SK-N-SH (cell line): ENCODE measurements at regions of chr14 and their contacts with region 1.

Region 1: DNA sequence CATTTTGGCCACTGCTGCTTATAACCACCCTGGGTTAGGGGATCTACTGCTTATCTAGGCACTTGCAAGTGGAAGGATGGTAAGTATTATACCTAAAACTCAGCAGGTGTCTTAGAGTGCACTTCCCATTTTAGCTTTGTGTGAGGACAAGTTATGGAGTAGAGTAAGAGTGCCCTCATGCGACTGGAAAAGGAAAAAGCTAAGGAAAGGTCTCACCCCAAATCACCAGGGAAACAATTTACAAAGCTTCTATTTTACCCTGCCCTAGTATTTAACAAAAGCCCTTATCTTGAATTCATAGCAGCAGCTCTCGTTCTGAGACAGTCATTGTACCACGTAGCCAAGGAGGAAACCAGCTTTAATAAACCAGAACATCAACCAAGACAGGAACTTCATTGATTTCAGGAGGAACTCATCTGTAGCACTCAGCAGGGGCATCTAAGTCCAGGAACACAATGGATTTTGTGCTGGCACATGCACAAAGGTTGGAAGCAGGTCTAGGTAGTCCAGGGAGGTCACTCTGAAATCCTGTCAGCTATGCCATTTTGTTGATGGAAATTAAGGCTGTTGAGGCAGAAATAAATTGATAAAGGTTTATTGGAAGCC is 2.9 kb downstream of the RDH12 start:
- DNase-seq: peak; percentile 59
- H3K4me3 ChIP-seq: no peak overlapping the region
- H3K27ac ChIP-seq: no peak overlapping the region
- H3K4me1 ChIP-seq: no peaks in the 10 kb centered on the region
- H3K27me3 ChIP-seq: no peaks in the 10 kb centered on the region
- CTCF ChIP-seq: peak; percentile 78
- EP300 ChIP-seq: no peak
- RAD21 ChIP-seq: peak; percentile 92

Region 2: GRCh38 chr14:67526676-67527459 is 177.7 kb before region 1 on chr14:
- CTCF ChIA-PET with region 1: interaction called, 27 read pairs
- POLR2A ChIA-PET with region 1: no interaction called
- DNase-seq: peak; percentile 65
- H3K4me3 ChIP-seq: peak overlapping the region in 1 of 2 experiments; percentile 34; a peak in 1 of 4 replicates
- H3K27ac ChIP-seq: no peak overlapping the region
- H3K4me1 ChIP-seq: no peaks in the 10 kb centered on the region; a peak in 1 of 4 replicates
- H3K27me3 ChIP-seq: peaks cover 18% of the 10 kb centered on the region; the same call in 1 of the 2 replicates
- CTCF ChIP-seq: peak; percentile 86
- EP300 ChIP-seq: no peak
- RAD21 ChIP-seq: peak; percentile 72

Region 3: GRCh38 chr14:67599698-67600561 is 104.7 kb before region 1 on chr14 and contains the start of gene PIGH:
- CTCF ChIA-PET with region 1: interaction called, 22 read pairs
- POLR2A ChIA-PET with region 1: no interaction called
- DNase-seq: peak; percentile 97
- H3K4me3 ChIP-seq: peak within 1 kb of the TSS; percentile 77 to 90
- H3K27ac ChIP-seq: peak within 1 kb of the TSS; percentile 65 to 66
- H3K4me1 ChIP-seq: peaks cover 0 to 6% of the 10 kb centered on the region in 2 experiments; a peak in 2 of 4 replicates
- H3K27me3 ChIP-seq: no peaks in the 10 kb centered on the region
- CTCF ChIP-seq: peak; percentile 58
- EP300 ChIP-seq: no peak
- RAD21 ChIP-seq: no peak; the same call in 1 of the 2 replicates
- polyA plus RNA-seq, gene PIGH: 23.6 and 26.5 TPM in 2 replicates

Region 4: GRCh38 chr14:67650694-67651093 is 53.9 kb before region 1 on chr14:
- CTCF ChIA-PET with region 1: interaction called, 13 read pairs
- POLR2A ChIA-PET with region 1: no interaction called
- DNase-seq: no peak
- H3K4me3 ChIP-seq: no peak overlapping the region
- H3K27ac ChIP-seq: peak overlapping the region in 1 of 2 experiments; percentile 68; a peak in 1 of 4 replicates
- H3K4me1 ChIP-seq: peaks cover 0 to 6% of the 10 kb centered on the region in 2 experiments; a peak in 1 of 4 replicates
- H3K27me3 ChIP-seq: no peaks in the 10 kb centered on the region
- CTCF ChIP-seq: no peak
- EP300 ChIP-seq: no peak
- RAD21 ChIP-seq: no peak

Region 5: GRCh38 chr14:67717048-67717447 is 12.5 kb after region 1 on chr14:
- CTCF ChIA-PET with region 1: interaction called, 39 read pairs
- POLR2A ChIA-PET with region 1: no interaction called
- DNase-seq: no peak
- H3K4me3 ChIP-seq: no peak overlapping the region
- H3K27ac ChIP-seq: no peak overlapping the region
- H3K4me1 ChIP-seq: peaks cover 0 to 2% of the 10 kb centered on the region in 2 experiments; a peak in 1 of 4 replicates
- H3K27me3 ChIP-seq: no peaks in the 10 kb centered on the region; the same call in 1 of the 2 replicates
- CTCF ChIP-seq: no peak
- EP300 ChIP-seq: no peak
- RAD21 ChIP-seq: no peak

Region 6: GRCh38 chr14:67765321-67765720 is 60.7 kb after region 1 on chr14:
- CTCF ChIA-PET with region 1: no interaction called
- POLR2A ChIA-PET with region 1: no interaction called
- DNase-seq: no peak
- H3K4me3 ChIP-seq: no peak overlapping the region
- H3K27ac ChIP-seq: no peak overlapping the region
- H3K4me1 ChIP-seq: no peaks in the 10 kb centered on the region
- H3K27me3 ChIP-seq: no peaks in the 10 kb centered on the region
- CTCF ChIP-seq: no peak
- EP300 ChIP-seq: no peak
- RAD21 ChIP-seq: no peak